Psoas muscle (tissue), 8 donors: ENCODE measurements at regions of chr2 and their contacts with region 1.

Region 1: GRCh38 chr2:24084386-24085361 is at the start of gene TP53I3:
- DNase-seq: peak; percentile 90 to 94
- ATAC-seq: peak; percentile 97 to 99 (median 98)
- H3K4me3 ChIP-seq: peak within 1 kb of the TSS; percentile 65
- H3K27ac ChIP-seq: peak within 1 kb of the TSS; percentile 73
- H3K4me1 ChIP-seq: peaks cover 8% of the 10 kb centered on the region
- H3K27me3 ChIP-seq: no peaks in the 10 kb centered on the region
- CTCF ChIP-seq: peak; percentile 93
- total RNA-seq, gene TP53I3: 1.3 to 5.0 (median 2.6) TPM

Region 2: GRCh38 chr2:23824777-23825212 is 259.9 kb before region 1 on chr2:
- intact Hi-C with region 1: loop called in 1 of 2 experiments (anchors 2 kb)
- DNase-seq: no peak
- ATAC-seq: peak in 3 of 4 donors; percentile 35 to 59 (median 53)
- H3K4me3 ChIP-seq: no peak overlapping the region
- H3K27ac ChIP-seq: no peak overlapping the region
- H3K4me1 ChIP-seq: no peaks in the 10 kb centered on the region
- H3K27me3 ChIP-seq: no peaks in the 10 kb centered on the region
- CTCF ChIP-seq: peak; percentile 72

Region 3: GRCh38 chr2:24046930-24047702 is 37.6 kb before region 1 on chr2 and contains the start of gene WDCP:
- intact Hi-C with region 1: loop called in 1 of 2 experiments (anchors 5 kb)
- DNase-seq: peak; percentile 93 to 95
- ATAC-seq: peak; percentile 100
- H3K4me3 ChIP-seq: peak within 1 kb of the TSS; percentile 88
- H3K27ac ChIP-seq: peak within 1 kb of the TSS; percentile 78
- H3K4me1 ChIP-seq: peaks cover 15% of the 10 kb centered on the region
- H3K27me3 ChIP-seq: peaks cover 0 to 17% (median 4%) of the 10 kb centered on the region in 3 donors
- CTCF ChIP-seq: no peak
- total RNA-seq, gene WDCP: 6.5 to 14.6 (median 9.7) TPM